ENCODE measurements at regions of chrX and their contacts with region 1.

Region 1: GRCh38 chrX:15761564-15762191 is 23.6 kb downstream of the CA5B start:
- DNase-seq: no peak
- H3K4me3 Mint-ChIP-seq: no peak overlapping the region
- H3K27ac Mint-ChIP-seq: peak overlapping the region; percentile 77
- H3K4me1 Mint-ChIP-seq: peaks cover 26% of the 10 kb centered on the region
- H3K27me3 Mint-ChIP-seq: no peaks in the 10 kb centered on the region

Region 2: DNA sequence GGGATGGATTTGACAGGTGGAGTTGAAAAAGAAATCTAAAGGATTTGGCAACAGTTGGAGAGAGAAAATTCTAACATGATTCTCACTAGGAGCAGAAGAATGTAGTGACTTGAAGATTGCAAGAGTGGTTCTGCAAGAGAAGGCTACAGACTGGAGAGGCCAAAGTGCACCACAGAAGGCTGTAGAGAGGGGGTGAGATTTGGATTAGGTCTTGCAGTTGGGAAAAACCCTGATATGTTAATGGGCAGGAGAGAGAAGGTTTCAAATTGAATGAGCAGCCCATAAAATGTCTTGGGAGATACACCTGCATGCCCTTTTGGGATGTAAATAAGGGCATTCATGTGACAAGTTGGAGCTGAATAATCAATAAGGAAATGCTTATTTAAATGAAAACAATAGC is 362.8 kb before region 1 on chrX:
- intact Hi-C with region 1: no loop called
- DNase-seq: no peak
- H3K4me3 Mint-ChIP-seq: no peak overlapping the region
- H3K27ac Mint-ChIP-seq: no peak overlapping the region
- H3K4me1 Mint-ChIP-seq: peaks cover 2% of the 10 kb centered on the region
- H3K27me3 Mint-ChIP-seq: no peaks in the 10 kb centered on the region

Region 3: DNA sequence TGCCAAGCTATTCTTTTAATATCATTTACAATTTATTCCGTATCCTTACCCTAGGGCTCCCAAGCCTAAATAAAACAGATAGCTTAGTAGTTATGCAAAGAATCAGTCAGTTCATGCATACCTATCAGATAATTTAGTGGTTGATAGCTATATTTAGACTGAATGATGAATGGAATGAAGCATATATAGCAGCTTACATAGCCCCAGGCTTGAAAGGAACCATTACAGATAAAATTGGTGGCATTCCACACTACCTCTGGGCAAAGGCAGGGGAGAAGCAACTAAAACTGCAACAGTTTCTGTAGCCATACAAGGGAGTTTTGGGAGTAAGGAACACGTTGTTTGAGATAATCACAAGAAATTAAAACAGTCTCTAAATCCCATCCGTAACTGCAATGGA is 163.6 kb before region 1 on chrX:
- intact Hi-C with region 1: no loop called
- DNase-seq: no peak
- H3K4me3 Mint-ChIP-seq: no peak overlapping the region
- H3K27ac Mint-ChIP-seq: no peak overlapping the region
- H3K4me1 Mint-ChIP-seq: no peaks in the 10 kb centered on the region
- H3K27me3 Mint-ChIP-seq: peaks cover 7% of the 10 kb centered on the region

Region 4: GRCh38 chrX:15686818-15687685 is 74.6 kb before region 1 on chrX:
- intact Hi-C with region 1: loop called (anchors 2 kb)
- DNase-seq: peak; percentile 37
- H3K4me3 Mint-ChIP-seq: no peak overlapping the region
- H3K27ac Mint-ChIP-seq: no peak overlapping the region
- H3K4me1 Mint-ChIP-seq: peaks cover 4% of the 10 kb centered on the region
- H3K27me3 Mint-ChIP-seq: no peaks in the 10 kb centered on the region

Region 5: DNA sequence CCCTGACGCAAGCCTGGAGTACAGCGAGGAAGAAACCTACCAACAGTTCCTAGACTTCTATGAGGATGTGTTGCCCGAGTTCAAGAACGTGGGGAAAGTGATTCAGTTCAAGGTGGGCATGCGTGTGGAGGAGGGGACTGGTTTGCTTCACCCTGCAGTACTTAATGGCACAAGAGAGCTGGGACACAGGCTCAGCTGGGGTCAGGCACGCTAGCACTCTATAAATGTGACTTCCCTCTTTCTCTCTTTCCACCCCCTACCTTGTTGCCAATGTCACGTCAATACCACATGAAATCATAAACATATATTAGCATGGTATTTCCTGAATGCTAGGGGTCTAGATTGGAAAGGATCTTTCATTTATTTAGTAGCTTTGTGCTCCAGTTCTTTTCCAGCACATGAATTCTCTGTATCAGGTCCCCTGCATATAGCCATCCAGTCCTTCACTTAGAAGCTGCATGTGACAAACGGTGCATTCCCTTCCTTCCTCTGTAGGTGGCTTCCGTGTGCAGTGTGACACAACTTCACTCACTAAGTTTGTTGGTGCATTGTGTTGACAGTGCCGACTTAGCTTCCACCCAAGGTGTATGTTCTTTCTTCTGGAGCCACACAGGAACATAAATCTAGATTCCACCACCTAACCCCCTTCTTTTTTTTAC is 54.2 kb after region 1 on chrX:
- intact Hi-C with region 1: loop called (anchors 2 kb)
- DNase-seq: peak; percentile 15
- H3K4me3 Mint-ChIP-seq: no peak overlapping the region
- H3K27ac Mint-ChIP-seq: peak overlapping the region; percentile 92
- H3K4me1 Mint-ChIP-seq: peaks cover 41% of the 10 kb centered on the region
- H3K27me3 Mint-ChIP-seq: no peaks in the 10 kb centered on the region

Region 6: DNA sequence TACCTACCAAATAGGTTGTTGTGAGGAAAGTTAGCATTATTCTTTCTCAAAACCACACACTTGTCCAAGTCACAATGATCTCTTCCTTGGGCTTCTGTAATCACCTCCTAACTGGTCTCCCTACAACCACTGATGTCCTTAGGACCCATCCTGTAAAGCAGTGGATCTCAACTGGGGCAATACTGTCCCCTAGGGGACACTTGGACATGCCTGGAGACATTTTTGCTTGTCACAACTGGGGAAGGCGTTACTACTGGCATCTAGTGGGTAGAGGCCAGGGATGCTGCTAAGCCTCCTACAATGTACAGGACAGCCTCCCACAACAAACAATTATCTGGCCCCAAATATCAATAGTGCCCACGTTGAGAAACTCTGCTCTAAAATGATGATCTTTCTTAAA is 211.6 kb after region 1 on chrX:
- intact Hi-C with region 1: loop called (anchors 2 kb)
- DNase-seq: no peak
- H3K4me3 Mint-ChIP-seq: no peak overlapping the region
- H3K27ac Mint-ChIP-seq: no peak overlapping the region
- H3K4me1 Mint-ChIP-seq: peaks cover 3% of the 10 kb centered on the region
- H3K27me3 Mint-ChIP-seq: no peaks in the 10 kb centered on the region